Activated CD8-positive, alpha-beta T cell treated with anti-CD3 and anti-CD28 coated beads for 36 hours (primary cell): ENCODE measurements at regions of chr5 and their contacts with region 1.

Region 1: DNA sequence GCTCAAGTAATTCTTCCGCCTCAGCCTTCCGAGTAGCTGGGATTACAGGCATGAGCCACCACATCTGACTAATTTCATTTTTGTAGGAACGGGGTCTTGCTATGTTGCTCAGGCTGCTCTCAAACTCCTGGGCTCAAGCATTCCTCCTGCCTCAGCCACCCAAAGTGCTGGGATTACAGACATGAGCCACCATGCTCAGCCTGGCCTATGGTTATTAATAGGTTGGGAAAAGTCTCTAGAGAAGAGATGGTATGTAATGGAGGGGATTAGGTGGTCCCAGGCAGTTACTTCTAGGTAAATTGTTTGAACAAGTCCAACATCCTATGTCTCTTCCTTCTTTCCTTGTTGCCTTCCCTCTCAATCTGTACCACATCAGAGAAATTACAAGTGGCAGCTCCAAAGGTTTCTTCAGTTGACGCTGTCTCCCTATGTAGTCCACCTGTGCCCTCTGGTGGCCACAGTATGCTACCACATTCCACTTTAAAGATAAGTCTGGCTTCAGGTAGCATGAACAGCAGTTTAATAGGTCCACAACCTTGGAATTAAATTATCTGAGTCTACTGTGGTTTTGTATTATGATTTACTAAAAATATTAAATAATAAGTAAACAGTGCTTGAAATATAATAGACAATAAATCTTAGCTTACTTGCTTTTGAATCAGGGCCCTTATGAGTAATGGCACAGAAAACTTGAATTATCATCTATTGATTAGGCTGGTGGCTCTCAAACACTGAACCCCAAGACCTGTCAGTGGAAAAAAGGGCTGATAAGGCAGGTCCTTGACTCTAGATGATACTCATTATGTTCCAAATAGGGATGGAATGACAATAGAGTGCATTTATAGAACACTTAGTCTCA is 9.7 kb downstream of the TIGD6 start:
- DNase-seq: peak; percentile 85
- ATAC-seq: peak; percentile 98
- H3K4me3 Mint-ChIP-seq: no peak overlapping the region
- H3K27ac Mint-ChIP-seq: no peak overlapping the region
- H3K4me1 Mint-ChIP-seq: no peaks in the 10 kb centered on the region
- H3K27me3 Mint-ChIP-seq: no peaks in the 10 kb centered on the region
- CTCF ChIP-seq: peak; percentile 86

Region 2: DNA sequence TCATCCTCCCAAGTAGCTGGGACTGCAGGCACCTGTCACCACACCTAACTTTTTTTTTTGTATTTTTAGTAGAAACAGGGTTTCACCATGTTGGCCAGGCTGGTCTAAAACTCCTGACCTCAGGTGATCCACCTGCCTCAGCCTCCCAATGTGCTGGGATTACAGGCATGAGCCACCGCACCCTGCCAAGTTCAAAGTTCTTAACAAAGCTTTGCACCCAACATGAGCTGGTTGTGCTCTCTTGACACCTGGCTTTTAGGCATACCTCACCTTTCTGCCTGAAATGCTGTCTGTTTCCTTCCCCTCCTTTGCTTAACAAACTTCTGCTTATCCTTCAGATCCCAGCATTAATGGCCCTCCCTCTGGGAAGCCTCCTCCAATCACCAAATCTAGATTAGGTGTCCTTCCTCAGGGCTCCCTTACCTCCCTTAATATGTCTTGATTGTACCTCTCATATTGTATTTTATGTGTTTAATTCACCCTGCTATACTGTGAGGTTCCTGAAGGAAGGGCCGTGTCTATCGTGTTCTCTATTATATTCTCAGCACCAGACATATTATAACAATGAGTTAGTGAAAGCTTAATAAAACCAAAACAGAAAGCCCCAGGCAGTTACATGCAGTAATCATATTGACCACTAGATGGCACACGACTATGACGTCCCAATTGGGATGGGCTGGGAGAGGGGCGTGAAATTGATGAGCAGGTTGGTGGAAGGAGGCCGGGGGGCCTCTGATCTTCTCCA is 323.5 kb before region 1 on chr5:
- CTCF ChIA-PET with region 1: interaction called, 14 read pairs
- POLR2A ChIA-PET with region 1: no interaction called
- intact Hi-C with region 1: no loop called
- DNase-seq: peak; percentile 54
- ATAC-seq: peak; percentile 66
- H3K4me3 Mint-ChIP-seq: no peak overlapping the region
- H3K27ac Mint-ChIP-seq: no peak overlapping the region
- H3K4me1 Mint-ChIP-seq: no peaks in the 10 kb centered on the region
- H3K27me3 Mint-ChIP-seq: peaks cover 3% of the 10 kb centered on the region
- CTCF ChIP-seq: peak; percentile 86

Region 3: DNA sequence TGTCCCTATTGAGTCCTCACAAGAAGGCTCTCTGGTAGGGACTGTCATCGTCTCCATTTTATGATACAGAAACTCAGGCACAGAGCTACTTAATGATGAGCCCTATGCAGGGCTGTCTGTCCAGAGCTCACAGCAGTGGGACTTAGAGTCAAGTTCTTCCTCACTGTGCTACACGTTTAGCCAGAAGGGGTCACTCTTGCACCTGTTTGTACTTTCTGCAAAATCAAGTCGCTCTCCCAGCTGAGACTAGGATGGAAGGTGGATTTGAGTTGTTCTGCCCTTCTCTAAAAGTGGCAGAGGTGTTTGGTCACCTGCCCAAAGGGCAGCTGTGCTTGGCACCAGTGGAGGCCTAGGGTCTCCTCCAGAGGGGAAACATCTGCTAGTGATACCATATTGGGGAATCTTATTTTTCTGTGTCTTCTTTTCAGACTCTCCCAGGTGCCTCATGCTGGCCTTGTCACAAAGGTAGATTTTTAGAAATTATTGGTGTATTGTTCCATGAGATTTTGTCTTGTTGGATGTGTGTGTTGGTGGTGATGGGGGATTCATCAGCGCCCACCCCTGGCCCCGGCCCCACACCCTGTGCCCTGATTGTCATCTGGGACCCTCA is 156.4 kb before region 1 on chr5:
- CTCF ChIA-PET with region 1: interaction called, 163 read pairs
- POLR2A ChIA-PET with region 1: no interaction called
- intact Hi-C with region 1: loop called (anchors 2 kb)
- DNase-seq: peak; percentile 75
- ATAC-seq: peak; percentile 48
- H3K4me3 Mint-ChIP-seq: no peak overlapping the region
- H3K27ac Mint-ChIP-seq: no peak overlapping the region
- H3K4me1 Mint-ChIP-seq: peaks cover 9% of the 10 kb centered on the region
- H3K27me3 Mint-ChIP-seq: no peaks in the 10 kb centered on the region
- CTCF ChIP-seq: peak; percentile 63

Region 4: GRCh38 chr5:149951135-149951749 is 39.5 kb before region 1 on chr5:
- CTCF ChIA-PET with region 1: interaction called, 12 read pairs
- POLR2A ChIA-PET with region 1: no interaction called
- intact Hi-C with region 1: no loop called
- DNase-seq: no peak
- ATAC-seq: no peak
- H3K4me3 Mint-ChIP-seq: no peak overlapping the region
- H3K27ac Mint-ChIP-seq: no peak overlapping the region
- H3K4me1 Mint-ChIP-seq: no peaks in the 10 kb centered on the region
- H3K27me3 Mint-ChIP-seq: peaks cover 4% of the 10 kb centered on the region
- CTCF ChIP-seq: no peak

Region 5: GRCh38 chr5:149969181-149969930 is 21.4 kb before region 1 on chr5:
- CTCF ChIA-PET with region 1: interaction called, 12 read pairs
- POLR2A ChIA-PET with region 1: no interaction called
- intact Hi-C with region 1: no loop called
- DNase-seq: no peak
- ATAC-seq: no peak
- H3K4me3 Mint-ChIP-seq: no peak overlapping the region
- H3K27ac Mint-ChIP-seq: no peak overlapping the region
- H3K4me1 Mint-ChIP-seq: peaks cover 7% of the 10 kb centered on the region
- H3K27me3 Mint-ChIP-seq: no peaks in the 10 kb centered on the region
- CTCF ChIP-seq: no peak

Region 6: DNA sequence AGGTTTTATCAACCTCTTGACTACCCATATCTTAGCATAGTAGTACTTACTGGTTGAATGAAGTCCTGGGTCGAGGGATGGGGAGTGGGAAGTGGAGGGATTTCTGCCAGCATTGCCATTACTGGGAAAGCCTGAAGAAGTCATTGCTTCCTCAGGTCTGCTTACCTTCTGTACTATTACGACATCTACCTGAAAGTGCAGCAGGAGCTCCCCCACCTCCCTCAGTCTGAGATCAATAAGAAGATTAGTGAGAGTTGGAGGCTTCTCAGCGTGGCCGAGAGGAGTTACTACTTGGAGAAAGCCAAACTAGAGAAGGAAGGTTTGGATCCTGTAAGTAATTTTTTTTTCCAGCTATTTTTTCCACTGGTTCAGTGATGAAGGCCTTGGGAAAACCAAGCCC is 15.6 kb after region 1 on chr5:
- CTCF ChIA-PET with region 1: interaction called, 18 read pairs
- POLR2A ChIA-PET with region 1: interaction called, 3 read pairs
- intact Hi-C with region 1: no loop called
- DNase-seq: no peak
- ATAC-seq: no peak
- H3K4me3 Mint-ChIP-seq: no peak overlapping the region
- H3K27ac Mint-ChIP-seq: no peak overlapping the region
- H3K4me1 Mint-ChIP-seq: peaks cover 40% of the 10 kb centered on the region
- H3K27me3 Mint-ChIP-seq: no peaks in the 10 kb centered on the region
- CTCF ChIP-seq: no peak

Region 7: GRCh38 chr5:150052956-150053712 is 62.4 kb after region 1 on chr5:
- CTCF ChIA-PET with region 1: no interaction called
- POLR2A ChIA-PET with region 1: no interaction called
- intact Hi-C with region 1: no loop called
- DNase-seq: peak; percentile 32
- ATAC-seq: peak; percentile 60
- H3K4me3 Mint-ChIP-seq: no peak overlapping the region
- H3K27ac Mint-ChIP-seq: peak overlapping the region; percentile 40
- H3K4me1 Mint-ChIP-seq: peaks cover 4% of the 10 kb centered on the region
- H3K27me3 Mint-ChIP-seq: no peaks in the 10 kb centered on the region
- CTCF ChIP-seq: no peak

Region 8: DNA sequence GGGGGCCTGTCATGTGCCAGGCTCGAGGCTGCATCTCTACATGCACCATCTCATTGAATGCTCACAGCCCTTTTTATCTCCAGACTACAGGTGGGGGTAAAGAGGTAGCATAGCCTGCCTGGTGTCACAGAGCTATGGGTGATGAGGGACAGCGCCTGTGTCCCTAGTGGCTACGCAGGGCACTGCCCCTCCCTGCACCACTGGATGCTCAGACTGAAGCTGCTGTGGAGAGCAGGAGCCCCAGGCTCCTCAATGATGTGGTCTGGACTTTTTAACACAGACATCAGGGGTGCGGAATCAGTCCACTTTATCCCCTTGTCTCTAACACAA is 296.1 kb after region 1 on chr5:
- CTCF ChIA-PET with region 1: no interaction called
- POLR2A ChIA-PET with region 1: no interaction called
- intact Hi-C with region 1: no loop called
- DNase-seq: peak; percentile 15
- ATAC-seq: peak; percentile 75
- H3K4me3 Mint-ChIP-seq: no peak overlapping the region
- H3K27ac Mint-ChIP-seq: no peak overlapping the region
- H3K4me1 Mint-ChIP-seq: no peaks in the 10 kb centered on the region
- H3K27me3 Mint-ChIP-seq: peaks cover 2% of the 10 kb centered on the region
- CTCF ChIP-seq: peak; percentile 25